Posterior vena cava (tissue), 2 donors: ENCODE measurements at regions of chr2 and their contacts with region 1.

Region 1: GRCh38 chr2:72350852-72351251 is 203.2 kb upstream of the CYP26B1 start:
- DNase-seq: no peak

Region 2: DNA sequence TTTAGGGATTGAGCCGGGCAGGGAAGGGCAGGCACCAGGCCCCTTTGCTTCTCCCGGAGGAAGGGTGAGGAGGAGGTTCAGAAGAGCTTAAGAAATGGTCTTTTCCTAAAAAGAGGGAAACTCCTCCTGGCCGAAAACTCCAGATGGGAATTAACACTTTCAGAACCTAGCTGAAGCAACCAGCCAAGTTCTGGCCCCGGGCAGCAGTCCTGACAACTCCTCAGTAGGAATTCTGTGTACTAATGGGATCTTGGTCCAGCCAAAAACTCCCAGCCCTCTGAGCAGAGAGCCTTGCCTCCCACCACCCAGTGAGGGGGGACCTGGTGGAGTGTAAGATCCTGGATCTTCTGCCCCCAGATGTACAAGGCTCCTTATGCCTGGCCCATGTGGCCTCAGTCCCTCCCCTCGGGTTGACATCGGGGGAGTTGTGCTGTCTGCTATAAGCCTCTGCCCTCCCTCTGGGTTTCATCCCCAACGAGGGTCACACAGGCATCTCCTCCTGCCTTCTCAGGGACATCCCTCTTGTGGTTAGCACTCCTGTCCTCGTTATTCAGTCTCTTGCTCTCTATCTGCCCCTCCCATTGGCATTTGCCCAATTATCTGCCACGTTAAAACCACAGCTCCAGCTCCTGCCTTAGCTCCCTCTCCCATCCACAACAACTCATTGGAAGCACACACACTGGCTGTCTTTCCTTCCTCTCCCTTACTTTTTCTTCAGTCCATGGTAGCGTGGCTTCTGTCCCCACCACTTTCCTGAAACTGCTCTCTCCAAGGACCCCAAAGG is 387.7 kb before region 1 on chr2:
- intact Hi-C with region 1: no loop called
- DNase-seq: no peak

Region 3: DNA sequence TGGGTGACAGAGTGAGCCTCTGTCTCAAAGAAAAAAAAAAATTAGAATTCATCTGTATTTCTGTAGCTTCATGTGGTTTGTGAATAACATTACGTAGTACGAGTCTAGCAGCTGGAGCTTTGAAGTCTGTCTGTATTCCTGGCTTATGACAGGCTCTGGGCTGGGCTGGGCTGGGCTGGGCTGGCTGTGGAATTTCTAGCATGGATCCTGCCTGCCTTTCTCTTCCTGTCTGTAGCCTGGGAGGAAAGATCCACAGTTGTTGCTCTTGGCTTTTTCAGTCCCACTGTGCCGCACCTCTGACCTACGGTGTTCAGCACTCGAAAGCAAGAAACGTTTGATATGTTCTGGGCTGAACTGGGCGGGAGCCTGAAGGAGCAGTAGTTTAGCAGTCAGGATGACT is 1741.4 kb after region 1 on chr2:
- intact Hi-C with region 1: loop called in 1 of 2 experiments (anchors 10 kb)
- DNase-seq: no peak